Activated CD8-positive, alpha-beta T cell treated with anti-CD3 and anti-CD28 coated beads for 36 hours (primary cell): ENCODE measurements at regions of chr3 and their contacts with region 1.

Region 1: DNA sequence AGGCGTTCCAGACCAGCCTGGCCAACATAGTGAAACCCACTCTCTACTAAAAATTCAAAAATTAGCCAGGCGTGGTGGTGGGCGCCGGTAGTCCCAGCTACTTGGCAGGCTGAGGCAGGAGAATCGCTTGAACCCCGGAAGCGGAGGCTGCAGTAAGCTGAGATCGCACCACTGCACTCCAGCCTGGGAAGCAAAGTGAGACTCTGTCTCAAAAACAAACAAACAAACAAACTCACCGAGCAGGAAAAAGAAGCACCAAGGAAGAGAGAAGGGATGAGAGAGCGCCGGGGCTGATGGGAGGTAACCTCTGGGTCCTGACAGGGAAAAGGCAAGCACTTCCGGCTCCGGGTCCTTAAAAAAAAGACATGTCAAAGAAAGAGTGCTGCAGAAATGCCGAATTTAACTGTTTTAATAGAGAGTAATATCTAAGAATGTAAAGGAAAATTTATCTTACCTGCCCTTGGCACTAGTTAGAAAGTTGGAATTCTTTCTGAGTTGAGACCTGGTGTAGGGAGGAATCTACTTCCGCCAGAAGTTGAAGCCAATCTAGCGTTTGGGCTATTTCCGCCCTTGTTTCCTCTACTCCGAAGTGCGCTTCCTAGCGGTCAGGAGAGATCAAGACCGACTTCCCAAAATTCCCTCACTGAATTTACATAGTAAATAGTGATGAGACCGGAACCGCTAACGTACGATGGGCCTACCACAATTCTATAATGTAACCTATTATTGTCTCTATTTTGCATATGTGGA is 29.1 kb downstream of the EFCAB12 start:
- DNase-seq: peak; percentile 82
- ATAC-seq: peak; percentile 85
- H3K4me3 Mint-ChIP-seq: peak overlapping the region; percentile 92
- H3K27ac Mint-ChIP-seq: peak overlapping the region; percentile 98
- H3K4me1 Mint-ChIP-seq: peaks cover 33% of the 10 kb centered on the region
- H3K27me3 Mint-ChIP-seq: no peaks in the 10 kb centered on the region
- CTCF ChIP-seq: peak; percentile 77

Region 2: DNA sequence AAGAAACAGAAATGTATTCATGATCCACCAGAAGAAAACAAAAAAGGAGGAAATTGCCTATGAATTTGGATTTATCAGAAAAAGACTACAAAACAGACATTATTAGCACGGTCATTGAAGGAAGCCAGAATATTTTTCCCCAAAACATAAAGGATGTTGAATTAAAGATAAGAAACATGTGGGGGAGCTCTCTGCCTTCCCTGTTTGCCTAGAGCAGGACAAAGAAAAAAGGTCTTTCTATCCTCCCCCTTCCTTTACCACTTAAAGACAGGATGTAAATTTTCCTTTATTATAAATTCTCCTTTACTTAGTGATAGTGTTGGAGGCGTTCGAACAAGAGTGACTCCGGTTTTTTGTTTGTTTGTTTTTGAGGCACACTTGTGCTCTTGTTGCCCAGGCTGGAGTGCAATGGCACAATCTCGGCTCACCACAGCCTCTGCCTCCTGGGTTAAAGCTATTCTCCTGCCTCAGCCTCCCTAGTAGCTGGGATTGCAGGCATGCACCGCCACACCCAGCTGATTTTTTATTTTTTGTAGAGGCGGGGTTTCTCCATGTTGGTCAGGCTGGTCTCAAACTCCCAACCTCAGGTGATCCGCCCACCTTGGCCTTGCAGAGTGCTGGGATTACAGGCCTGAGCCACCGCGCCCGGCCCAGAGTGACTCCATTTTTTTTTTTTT is 733.8 kb before region 1 on chr3:
- CTCF ChIA-PET with region 1: no interaction called
- POLR2A ChIA-PET with region 1: no interaction called
- intact Hi-C with region 1: no loop called
- DNase-seq: no peak
- ATAC-seq: no peak
- H3K4me3 Mint-ChIP-seq: no peak overlapping the region
- H3K27ac Mint-ChIP-seq: no peak overlapping the region
- H3K4me1 Mint-ChIP-seq: peaks cover 2% of the 10 kb centered on the region
- H3K27me3 Mint-ChIP-seq: peaks cover 2% of the 10 kb centered on the region
- CTCF ChIP-seq: no peak

Region 3: DNA sequence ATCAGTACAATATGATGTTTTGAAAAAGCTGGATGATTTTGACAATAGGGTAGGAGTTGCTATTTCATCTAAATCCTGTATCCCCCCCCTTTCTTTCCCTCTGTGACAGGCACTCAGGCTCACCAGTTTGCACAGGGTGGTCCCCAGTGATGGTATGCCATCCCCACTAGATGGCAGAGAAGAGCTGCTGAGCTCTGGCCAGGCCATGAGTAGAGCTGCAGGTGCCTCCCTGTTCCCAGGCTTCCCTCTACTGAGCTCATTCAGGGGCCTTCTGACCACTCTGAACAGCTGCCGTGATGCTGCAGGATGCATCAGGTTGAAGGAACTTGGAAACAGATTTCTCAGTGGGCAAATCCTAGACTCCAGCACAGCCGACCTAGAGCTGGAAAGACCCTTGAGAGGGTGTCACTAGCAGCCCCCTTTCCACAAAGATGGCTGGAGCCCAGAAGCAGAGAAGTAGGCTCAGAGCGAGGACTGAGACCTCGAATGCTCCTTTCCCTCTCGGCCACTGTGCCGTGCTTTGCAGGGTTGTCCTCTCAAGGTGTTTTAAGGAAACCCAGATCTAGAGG is 15.9 kb before region 1 on chr3:
- CTCF ChIA-PET with region 1: interaction called, 14 read pairs
- POLR2A ChIA-PET with region 1: interaction called, 4 read pairs
- intact Hi-C with region 1: no loop called
- DNase-seq: peak; percentile 67
- ATAC-seq: peak; percentile 98
- H3K4me3 Mint-ChIP-seq: no peak overlapping the region
- H3K27ac Mint-ChIP-seq: no peak overlapping the region
- H3K4me1 Mint-ChIP-seq: peaks cover 3% of the 10 kb centered on the region
- H3K27me3 Mint-ChIP-seq: no peaks in the 10 kb centered on the region
- CTCF ChIP-seq: peak; percentile 73

Region 4: GRCh38 chr3:129413687-129414506 is 14.6 kb after region 1 on chr3:
- CTCF ChIA-PET with region 1: interaction called, 16 read pairs
- POLR2A ChIA-PET with region 1: interaction called, 4 read pairs
- intact Hi-C with region 1: no loop called
- DNase-seq: no peak
- ATAC-seq: no peak
- H3K4me3 Mint-ChIP-seq: no peak overlapping the region
- H3K27ac Mint-ChIP-seq: no peak overlapping the region
- H3K4me1 Mint-ChIP-seq: no peaks in the 10 kb centered on the region
- H3K27me3 Mint-ChIP-seq: no peaks in the 10 kb centered on the region
- CTCF ChIP-seq: no peak

Region 5: DNA sequence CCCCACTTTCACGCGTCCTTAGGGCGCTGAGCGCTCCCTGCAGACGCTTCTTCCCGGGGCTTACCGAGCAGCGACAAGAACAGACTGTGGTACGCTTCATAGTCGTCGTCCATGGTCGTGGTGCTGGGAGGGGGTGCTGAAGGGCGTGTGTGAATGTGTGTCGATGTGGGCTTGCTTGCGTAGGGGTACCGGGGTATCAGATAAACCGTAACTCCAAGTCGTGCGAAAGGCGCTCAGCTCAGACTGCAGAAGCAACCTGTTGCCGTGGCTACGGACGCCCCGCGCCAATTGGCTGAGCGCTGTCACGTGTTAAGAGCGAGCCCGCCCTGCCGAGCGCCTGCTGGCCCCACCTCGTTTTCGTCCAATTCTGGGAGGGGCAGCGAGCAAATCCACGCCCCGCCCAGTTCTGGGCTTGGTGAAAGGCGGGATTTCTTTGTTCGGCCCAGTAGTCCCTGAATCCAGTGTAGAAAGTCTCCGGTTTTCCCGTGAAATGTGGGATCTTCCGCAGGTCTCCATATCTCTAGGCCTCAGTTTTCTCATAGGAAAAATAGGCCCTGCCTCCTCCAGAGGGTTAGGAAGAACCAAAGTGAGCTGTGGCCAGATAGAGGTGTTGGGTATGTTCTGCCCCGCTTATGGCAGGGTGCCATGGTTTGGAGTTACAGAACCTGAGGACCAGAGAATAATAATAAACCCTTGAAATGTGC is 29.2 kb after region 1 on chr3 and contains the start of gene EFCAB12:
- CTCF ChIA-PET with region 1: interaction called, 10 read pairs
- POLR2A ChIA-PET with region 1: interaction called, 7 read pairs
- intact Hi-C with region 1: no loop called
- DNase-seq: peak; percentile 93
- ATAC-seq: peak; percentile 96
- H3K4me3 Mint-ChIP-seq: peak within 1 kb of the TSS; percentile 61
- H3K27ac Mint-ChIP-seq: peak within 1 kb of the TSS; percentile 58
- H3K4me1 Mint-ChIP-seq: peaks cover 36% of the 10 kb centered on the region
- H3K27me3 Mint-ChIP-seq: peaks cover 2% of the 10 kb centered on the region
- CTCF ChIP-seq: no peak
- total RNA-seq, gene EFCAB12: 0.56 to 0.65 TPM

Region 6: DNA sequence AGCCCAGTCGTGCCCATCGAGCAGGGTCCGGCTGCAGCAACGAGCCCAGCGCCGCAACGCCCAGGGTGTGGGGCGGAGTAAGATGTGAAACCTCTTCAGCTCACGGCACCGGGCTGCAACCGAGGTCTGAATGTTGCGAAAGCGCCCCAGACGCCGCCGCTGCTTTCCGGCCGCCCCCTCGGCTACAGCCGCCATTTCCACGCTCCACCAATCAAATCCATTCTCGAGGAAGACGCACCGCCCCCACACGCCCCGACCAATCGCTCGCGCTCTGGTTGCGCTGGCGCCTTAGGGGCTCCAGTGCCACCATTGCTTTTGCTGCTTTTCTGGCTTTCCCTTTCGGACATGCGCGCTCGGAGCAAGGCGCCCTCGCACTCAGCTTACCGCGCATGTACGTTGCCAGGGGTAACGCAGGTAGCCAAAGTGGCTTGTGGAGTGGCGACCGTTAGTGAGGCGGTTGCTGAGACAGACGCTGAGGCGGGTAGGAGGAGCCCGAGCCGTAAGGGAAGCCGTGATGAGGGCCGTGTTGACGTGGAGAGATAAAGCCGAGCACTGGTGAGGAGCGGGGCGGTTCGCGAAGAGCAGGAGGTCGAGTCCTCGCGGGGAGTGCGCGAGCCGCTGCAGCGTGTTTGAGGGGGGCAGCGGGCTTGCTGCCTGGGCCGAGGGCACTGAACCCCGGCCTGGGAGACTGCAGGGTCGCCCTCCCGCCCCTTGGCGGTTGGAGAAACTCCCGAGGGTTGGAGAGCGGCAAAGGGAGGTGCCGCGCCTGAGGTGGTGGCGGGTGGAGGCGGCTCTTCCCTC is 40.7 kb after region 1 on chr3 and contains the starts of genes IFT122 and MBD4:
- CTCF ChIA-PET with region 1: interaction called, 9 read pairs
- POLR2A ChIA-PET with region 1: interaction called, 12 read pairs
- intact Hi-C with region 1: no loop called
- DNase-seq: peak; percentile 99
- ATAC-seq: peak; percentile 91
- H3K4me3 Mint-ChIP-seq: peak within 1 kb of the TSS; percentile 83
- H3K27ac Mint-ChIP-seq: peak within 1 kb of the TSS; percentile 89
- H3K4me1 Mint-ChIP-seq: peaks cover 52% of the 10 kb centered on the region
- H3K27me3 Mint-ChIP-seq: no peaks in the 10 kb centered on the region
- CTCF ChIP-seq: no peak
- total RNA-seq, gene IFT122: 18.9 to 20.4 TPM
- total RNA-seq, gene MBD4: 38.9 to 44.5 TPM